Activated naive CD4-positive, alpha-beta T cell treated with anti-CD3 and anti-CD28 coated beads, Interleukin-2, amount 10 ng/mL, durations not matched to agents 7 days and 5 days (primary cell): ENCODE measurements at regions of chr7 and their contacts with region 1.

Region 1: DNA sequence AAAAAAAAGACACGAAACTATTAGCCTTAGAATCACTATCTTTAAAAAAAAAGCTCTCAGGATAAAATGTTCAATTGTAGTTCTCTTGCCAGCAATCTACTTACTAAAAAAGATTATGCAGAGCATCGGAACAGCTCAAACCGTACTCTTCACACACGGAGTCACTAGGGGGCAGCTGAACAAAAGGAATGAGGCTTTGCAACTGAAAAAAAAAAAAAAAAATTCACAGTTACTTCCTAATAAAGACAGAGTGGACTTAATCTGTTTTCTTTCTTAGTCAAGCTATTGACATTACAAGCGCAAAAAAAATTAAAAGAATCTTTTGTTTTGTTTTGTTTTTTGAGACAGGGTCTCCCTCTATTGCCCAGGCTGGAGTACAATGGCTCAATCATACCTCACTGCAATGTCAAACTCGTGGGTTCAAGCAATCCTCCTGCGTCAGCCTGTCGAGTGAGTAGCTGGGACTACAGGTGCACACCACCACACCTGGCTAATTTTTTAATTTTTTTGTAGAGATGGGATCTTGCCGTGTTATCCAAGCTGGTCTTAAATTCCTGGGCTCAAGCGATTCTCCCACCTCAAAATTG is 11.5 kb downstream of the PMS2 start:
- DNase-seq: peak; percentile 64
- H3K4me3 Mint-ChIP-seq: no peak overlapping the region
- H3K27ac Mint-ChIP-seq: no peak overlapping the region
- H3K4me1 Mint-ChIP-seq: no peaks in the 10 kb centered on the region
- H3K27me3 Mint-ChIP-seq: no peaks in the 10 kb centered on the region

Region 2: GRCh38 chr7:6106140-6106904 is 109.0 kb after region 1 on chr7:
- CTCF ChIA-PET with region 1: interaction called, 16 read pairs
- DNase-seq: peak; percentile 67
- H3K4me3 Mint-ChIP-seq: peak overlapping the region; percentile 92
- H3K27ac Mint-ChIP-seq: peak overlapping the region; percentile 98
- H3K4me1 Mint-ChIP-seq: peaks cover 38% of the 10 kb centered on the region
- H3K27me3 Mint-ChIP-seq: no peaks in the 10 kb centered on the region

Region 3: GRCh38 chr7:6154542-6155404 is 157.5 kb after region 1 on chr7:
- CTCF ChIA-PET with region 1: no interaction called
- DNase-seq: no peak
- H3K4me3 Mint-ChIP-seq: no peak overlapping the region
- H3K27ac Mint-ChIP-seq: no peak overlapping the region
- H3K4me1 Mint-ChIP-seq: no peaks in the 10 kb centered on the region
- H3K27me3 Mint-ChIP-seq: no peaks in the 10 kb centered on the region

Region 4: GRCh38 chr7:6323967-6324701 is 326.8 kb after region 1 on chr7:
- CTCF ChIA-PET with region 1: interaction called, 28 read pairs
- DNase-seq: no peak
- H3K4me3 Mint-ChIP-seq: no peak overlapping the region
- H3K27ac Mint-ChIP-seq: no peak overlapping the region
- H3K4me1 Mint-ChIP-seq: peaks cover 3% of the 10 kb centered on the region
- H3K27me3 Mint-ChIP-seq: peaks cover 11% of the 10 kb centered on the region